HCT116 (cell line): ENCODE measurements at regions of chr19 and their contacts with region 1.

Region 1: GRCh38 chr19:18985257-18985656 is 44.2 kb upstream of the HOMER3 start:
- DNase-seq: no peak
- ATAC-seq: no peak
- H3K4me3 ChIP-seq: no peak overlapping the region
- H3K27ac ChIP-seq: no peak overlapping the region
- H3K4me1 ChIP-seq: peaks cover 0 to 9% of the 10 kb centered on the region in 2 experiments; a peak in 1 of 4 replicates
- H3K27me3 ChIP-seq: no peaks in the 10 kb centered on the region
- CTCF ChIP-seq: no peak
- POLR2A ChIP-seq: no peak
- RAD21 ChIP-seq: no peak

Region 2: DNA sequence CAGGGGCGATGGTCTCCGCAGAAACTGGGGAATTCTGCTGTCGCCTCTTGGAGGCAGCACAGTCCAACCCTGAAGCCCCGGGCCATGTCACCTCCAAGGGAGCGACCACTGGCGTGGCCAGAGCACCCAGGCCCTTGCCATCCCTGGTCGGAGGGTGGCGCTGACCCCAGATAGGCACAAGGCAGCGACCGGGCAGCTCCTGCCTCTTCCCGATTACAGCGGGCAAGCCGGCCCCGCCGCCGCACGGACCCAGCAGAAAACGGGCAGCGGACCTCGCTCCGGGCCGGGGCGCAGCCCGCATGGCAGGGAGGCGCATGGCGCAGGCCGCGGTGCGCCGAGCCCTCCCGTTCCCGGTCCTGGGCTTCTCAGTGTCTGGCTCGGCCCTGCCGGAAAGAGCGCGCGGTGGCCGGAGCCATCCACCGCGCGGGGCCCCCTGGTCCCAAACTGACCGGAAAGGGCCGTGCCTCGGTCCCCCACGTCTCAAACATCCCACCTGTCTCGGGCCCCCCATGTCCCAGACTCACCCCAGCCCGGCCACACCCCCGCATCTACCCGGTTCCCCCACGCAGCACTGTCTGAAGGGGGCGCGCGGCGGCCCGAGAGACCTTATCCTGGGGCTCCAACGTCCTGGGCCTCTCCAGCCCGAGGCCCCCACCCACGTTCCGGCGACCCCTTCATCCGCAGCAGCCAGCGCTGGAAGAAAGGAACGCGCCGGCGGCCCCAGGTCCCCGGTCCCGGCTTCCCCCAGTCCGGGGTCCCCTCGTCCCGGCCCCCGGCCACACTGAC is 90.0 kb before region 1 on chr19:
- CTCF ChIA-PET with region 1: interaction called, 10 read pairs
- POLR2A ChIA-PET with region 1: no interaction called
- RAD21 ChIA-PET with region 1: no interaction called
- intact Hi-C with region 1: loop called (anchors 1 kb)
- DNase-seq: peak; percentile 38
- ATAC-seq: peak; percentile 87
- H3K4me3 ChIP-seq: peak overlapping the region; percentile 35 to 56
- H3K27ac ChIP-seq: peak overlapping the region; percentile 40; the same call in 1 of the 2 replicates
- H3K4me1 ChIP-seq: peaks cover 0 to 4% of the 10 kb centered on the region in 2 experiments; a peak in 2 of 4 replicates
- H3K27me3 ChIP-seq: no peaks in the 10 kb centered on the region
- CTCF ChIP-seq: peak; percentile 50 to 88 (median 53)
- POLR2A ChIP-seq: no peak
- RAD21 ChIP-seq: peak; percentile 75

Region 3: DNA sequence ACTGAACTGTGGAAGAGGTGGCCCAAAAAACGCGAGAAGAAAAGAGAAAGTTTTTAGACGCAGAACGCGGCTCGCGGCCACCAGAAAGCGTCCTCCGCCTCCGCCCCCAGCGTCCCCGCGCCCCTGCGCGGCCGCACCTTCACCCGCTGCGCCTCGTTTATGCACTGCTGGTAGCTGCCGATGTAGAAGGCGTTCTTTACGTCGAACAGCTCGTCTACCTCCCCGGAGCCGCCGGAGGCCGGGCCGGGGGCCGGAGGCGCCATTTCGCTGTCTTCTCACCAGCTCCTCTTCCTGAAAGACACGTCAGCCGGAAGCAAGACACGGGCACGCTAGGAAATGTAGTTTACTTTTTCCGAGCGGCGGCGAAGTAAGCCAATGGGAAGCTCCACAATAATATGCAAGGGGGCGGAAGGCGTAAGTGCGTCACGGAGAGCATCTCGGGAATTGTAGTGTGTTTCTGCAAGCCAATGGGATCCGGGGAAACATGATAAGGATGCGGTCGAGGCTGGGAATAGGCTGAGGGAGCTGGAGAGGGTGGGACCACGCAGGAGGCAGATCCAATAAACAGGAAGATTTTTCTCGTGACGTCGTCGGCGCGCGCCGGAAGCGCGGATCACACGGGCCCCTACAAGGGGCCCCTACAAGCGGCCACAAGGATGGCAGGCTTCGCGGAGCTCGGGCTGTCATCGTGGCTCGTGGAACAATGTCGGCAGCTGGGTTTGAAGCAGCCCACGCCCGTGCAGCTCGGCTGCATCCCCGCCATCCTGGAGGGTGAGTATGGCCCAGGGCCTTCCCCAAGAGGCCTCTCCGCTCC is 66.0 kb before region 1 on chr19 and contains the starts of genes COPE and DDX49:
- CTCF ChIA-PET with region 1: interaction called, 33 read pairs
- POLR2A ChIA-PET with region 1: interaction called, 10 read pairs
- RAD21 ChIA-PET with region 1: interaction called, 5 to 6 read pairs
- intact Hi-C with region 1: loop called (anchors 2 kb)
- DNase-seq: peak; percentile 99
- ATAC-seq: peak; percentile 95
- H3K4me3 ChIP-seq: peak within 1 kb of the TSS; percentile 86 to 100
- H3K27ac ChIP-seq: peak within 1 kb of the TSS; percentile 79
- H3K4me1 ChIP-seq: peaks cover 16 to 21% of the 10 kb centered on the region in 2 experiments
- H3K27me3 ChIP-seq: no peaks in the 10 kb centered on the region
- CTCF ChIP-seq: no peak
- POLR2A ChIP-seq: peak; percentile 56
- RAD21 ChIP-seq: no peak
- total RNA-seq, gene COPE: 263 TPM
- total RNA-seq, gene DDX49: 51.9 TPM

Region 4: DNA sequence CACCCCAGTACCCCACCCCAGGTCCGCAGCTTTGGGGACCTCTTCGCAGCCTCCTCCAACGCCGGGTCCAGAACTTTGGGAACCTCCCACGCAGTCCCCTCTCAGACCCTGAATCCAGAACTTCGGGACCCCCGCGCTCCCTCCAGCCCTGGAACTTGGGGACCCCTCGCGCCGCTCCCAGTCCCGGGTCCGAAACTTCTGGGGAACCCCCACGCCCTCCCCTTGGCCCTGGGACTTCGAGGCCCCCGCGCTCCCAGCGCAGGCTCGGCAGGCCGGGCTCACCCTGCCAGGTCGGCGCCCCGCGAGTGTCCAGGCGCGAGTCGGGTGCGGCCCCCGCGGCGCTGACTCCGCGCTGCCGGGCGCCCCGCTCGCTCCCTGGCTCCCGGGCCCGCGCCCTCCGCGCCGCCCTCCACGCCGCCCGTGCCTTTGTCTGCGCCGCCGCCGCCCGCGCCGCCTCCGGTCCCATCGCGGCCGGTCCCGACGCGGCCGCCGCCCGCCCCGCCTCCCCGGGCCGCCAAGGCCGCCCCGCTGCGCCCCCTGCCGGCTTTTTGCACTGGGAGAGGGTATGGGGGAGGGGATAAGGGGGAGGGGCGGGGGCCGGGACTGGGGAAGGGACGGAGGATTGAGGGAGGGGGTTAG is 44.4 kb before region 1 on chr19 and contains the start of gene HOMER3:
- CTCF ChIA-PET with region 1: interaction called, 6 read pairs
- POLR2A ChIA-PET with region 1: no interaction called
- RAD21 ChIA-PET with region 1: interaction called in 1 of 2 experiments, 4 read pairs
- intact Hi-C with region 1: loop called (anchors 2 kb)
- DNase-seq: no peak
- ATAC-seq: peak; percentile 79
- H3K4me3 ChIP-seq: peak within 1 kb of the TSS; percentile 77 to 79
- H3K27ac ChIP-seq: peak within 1 kb of the TSS; percentile 91
- H3K4me1 ChIP-seq: peaks cover 10 to 35% of the 10 kb centered on the region in 2 experiments
- H3K27me3 ChIP-seq: no peaks in the 10 kb centered on the region
- CTCF ChIP-seq: peak in 2 of 3 experiments; percentile 4 to 31; a peak in 1 of 6 replicates
- POLR2A ChIP-seq: no peak
- RAD21 ChIP-seq: no peak
- total RNA-seq, gene HOMER3: 45.2 TPM

Region 5: DNA sequence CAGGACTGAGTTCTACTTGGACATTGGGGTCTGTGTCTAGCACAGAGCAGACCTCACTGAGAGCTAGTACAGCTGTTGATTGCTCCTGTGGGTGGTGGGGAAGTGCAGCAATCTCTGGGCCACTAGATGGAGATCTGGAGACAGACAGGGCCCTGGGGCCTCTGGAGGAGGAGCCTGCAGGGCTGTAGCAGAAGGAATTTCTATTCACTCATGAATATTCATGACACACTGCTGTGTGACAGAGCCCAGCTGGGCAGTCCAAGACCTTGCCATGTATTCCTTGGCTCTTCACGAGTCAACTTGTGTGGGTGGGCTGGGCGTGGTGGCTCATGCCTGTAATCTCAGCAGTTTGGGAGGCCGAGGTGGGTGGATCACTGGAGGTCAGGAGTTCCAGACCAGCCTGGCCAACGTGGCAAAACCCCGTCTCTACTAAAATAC is 10.6 kb after region 1 on chr19:
- CTCF ChIA-PET with region 1: interaction called, 17 read pairs
- POLR2A ChIA-PET with region 1: no interaction called
- RAD21 ChIA-PET with region 1: no interaction called
- intact Hi-C with region 1: no loop called
- DNase-seq: peak; percentile 23
- ATAC-seq: peak; percentile 96
- H3K4me3 ChIP-seq: no peak overlapping the region
- H3K27ac ChIP-seq: no peak overlapping the region
- H3K4me1 ChIP-seq: no peaks in the 10 kb centered on the region; a peak in 1 of 4 replicates
- H3K27me3 ChIP-seq: no peaks in the 10 kb centered on the region
- CTCF ChIP-seq: peak in 2 of 3 experiments; percentile 61 to 73; a peak in 4 of 6 replicates
- POLR2A ChIP-seq: no peak
- RAD21 ChIP-seq: peak; percentile 51